Mammary epithelial cell (primary cell): ENCODE measurements at regions of chr20 and their contacts with region 1.

Region 1: DNA sequence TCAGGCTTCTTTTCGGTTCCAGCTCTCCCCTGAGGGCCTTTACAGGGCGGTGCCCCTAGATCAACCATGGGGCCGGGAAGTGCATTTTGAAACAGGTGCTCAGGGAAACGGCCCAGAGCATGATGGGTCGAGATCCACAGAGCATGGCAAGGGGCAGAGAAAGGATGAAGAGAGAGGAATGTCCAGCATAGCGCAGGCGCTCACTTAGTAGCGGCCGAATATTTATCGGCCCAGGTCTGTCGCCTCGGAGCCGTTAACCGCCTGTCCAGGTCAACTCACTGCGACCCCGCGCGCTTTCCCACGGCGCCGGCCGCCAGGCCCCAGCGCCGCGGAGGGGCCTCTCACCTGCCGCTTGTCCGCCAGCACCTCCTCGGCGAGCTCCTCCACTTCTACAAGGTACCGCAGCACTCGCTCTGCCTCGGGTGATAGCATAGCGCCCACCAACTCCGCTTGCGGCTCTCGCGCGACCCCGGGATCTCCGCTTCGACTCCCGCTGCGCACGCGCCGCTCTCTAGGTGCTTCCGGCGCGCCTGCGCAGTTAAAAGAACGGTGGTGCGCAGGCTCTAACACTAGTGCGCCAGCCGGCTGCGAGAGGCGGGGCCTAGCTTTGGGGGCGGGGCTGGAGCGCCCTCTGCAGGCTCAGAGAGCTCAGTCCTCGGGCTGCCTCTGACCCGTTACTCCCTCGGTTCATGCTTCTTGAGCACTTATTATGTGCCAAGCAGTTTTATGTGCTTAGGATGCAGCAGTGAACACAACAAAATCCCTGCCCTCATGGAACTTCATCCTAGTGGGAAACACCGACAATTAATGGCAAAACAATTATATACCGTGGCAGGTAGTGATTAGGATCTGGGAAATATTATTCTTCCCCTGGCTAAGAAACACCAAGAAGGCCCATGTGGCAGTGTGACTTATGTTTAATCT is at the start of gene PDRG1:
- DNase-seq: peak; percentile 90
- H3K4me3 ChIP-seq: peak within 1 kb of the TSS; percentile 80 to 98 (median 86)
- H3K27ac ChIP-seq: peak within 1 kb of the TSS; percentile 40
- H3K4me1 ChIP-seq: peaks cover 8% of the 10 kb centered on the region
- H3K27me3 ChIP-seq: no peaks in the 10 kb centered on the region
- CTCF ChIP-seq: peak; percentile 84 to 96
- total RNA-seq, gene PDRG1: 5.0 to 15.6 TPM

Region 2: DNA sequence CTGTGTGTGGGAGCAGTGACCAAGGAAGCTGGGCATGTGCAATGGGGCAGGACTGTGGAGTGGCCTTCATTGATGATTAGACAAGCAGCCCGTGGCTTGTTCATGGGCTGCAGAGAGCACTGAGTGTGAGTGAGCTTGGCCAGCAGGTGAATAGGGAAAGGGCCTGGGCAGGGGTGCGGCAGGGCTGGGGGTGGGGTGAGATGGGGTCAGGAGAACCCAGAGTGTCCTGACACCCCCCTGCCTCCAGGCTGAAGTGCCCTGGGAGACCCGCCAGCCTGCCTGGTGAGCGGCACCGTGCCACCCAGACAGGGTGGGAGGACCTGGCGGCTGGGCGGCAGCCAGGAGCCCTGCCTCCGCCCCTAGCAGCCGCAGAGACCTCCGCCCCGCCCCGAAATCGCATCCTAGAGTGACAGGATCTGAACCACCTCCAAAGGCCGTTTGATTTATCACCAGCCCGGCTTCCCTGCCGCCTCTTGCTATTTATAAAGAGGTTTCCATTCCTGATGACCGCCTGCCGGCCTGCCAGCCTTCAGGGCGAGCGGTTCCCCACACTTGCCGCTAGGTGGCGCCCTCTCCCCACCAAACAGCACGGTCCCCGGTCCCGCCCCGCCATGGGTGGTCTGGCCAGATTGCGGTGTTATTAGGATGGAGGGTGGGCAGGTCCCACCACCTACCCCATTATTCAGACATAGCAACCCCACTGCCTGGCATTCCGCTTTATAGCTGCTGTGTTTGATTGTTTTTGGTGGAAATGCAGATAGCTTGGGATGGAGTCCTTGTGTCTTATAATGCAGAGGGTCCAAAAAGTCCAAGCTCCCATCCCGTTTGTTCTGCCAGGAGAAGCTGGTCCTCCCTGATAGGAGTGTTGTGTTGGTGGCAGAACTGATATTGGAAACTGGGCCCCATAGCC is 129.1 kb before region 1 on chr20:
- CTCF ChIA-PET with region 1: interaction called, 3 read pairs
- dilution Hi-C with region 1: no loop called
- in situ Hi-C with region 1: no loop called
- intact Hi-C with region 1: loop called (anchors 1 kb)
- DNase-seq: peak; percentile 29
- H3K4me3 ChIP-seq: no peak overlapping the region
- H3K27ac ChIP-seq: no peak overlapping the region
- H3K4me1 ChIP-seq: no peaks in the 10 kb centered on the region
- H3K27me3 ChIP-seq: no peaks in the 10 kb centered on the region
- CTCF ChIP-seq: peak; percentile 78 to 96

Region 3: GRCh38 chr20:31859998-31860709 is 91.6 kb before region 1 on chr20:
- CTCF ChIA-PET with region 1: no interaction called
- dilution Hi-C with region 1: no loop called
- in situ Hi-C with region 1: loop called in 1 of 2 experiments (anchors 10 kb)
- intact Hi-C with region 1: no loop called
- DNase-seq: peak; percentile 40
- H3K4me3 ChIP-seq: no peak overlapping the region
- H3K27ac ChIP-seq: no peak overlapping the region
- H3K4me1 ChIP-seq: peaks cover 10% of the 10 kb centered on the region
- H3K27me3 ChIP-seq: peaks cover 3% of the 10 kb centered on the region
- CTCF ChIP-seq: no peak

Region 4: DNA sequence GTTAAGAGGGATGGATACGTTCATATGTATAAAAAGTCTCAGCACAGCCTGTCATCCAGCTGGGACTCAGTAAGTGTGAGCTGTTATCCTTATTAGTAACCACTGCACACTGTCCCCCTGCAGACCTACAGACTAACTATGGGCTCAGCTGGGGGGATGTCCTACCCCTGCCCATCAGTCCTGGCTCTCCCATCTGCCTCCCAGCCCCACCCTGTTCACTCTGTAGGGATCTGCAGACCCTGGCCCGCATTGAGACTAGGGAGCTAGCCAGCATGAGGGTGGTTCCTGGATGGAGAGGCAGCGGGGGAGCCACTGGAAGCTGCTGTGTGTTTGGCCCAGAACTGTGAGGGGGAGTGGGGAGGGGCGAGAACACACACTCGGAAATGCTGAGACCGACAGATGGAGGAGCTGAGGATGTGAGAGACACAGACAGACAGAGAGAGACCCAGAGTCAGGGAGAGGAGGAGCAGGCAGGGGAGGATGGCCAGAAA is 33.2 kb after region 1 on chr20:
- CTCF ChIA-PET with region 1: no interaction called
- dilution Hi-C with region 1: no loop called
- in situ Hi-C with region 1: no loop called
- intact Hi-C with region 1: loop called (anchors 1 kb)
- DNase-seq: no peak
- H3K4me3 ChIP-seq: no peak overlapping the region
- H3K27ac ChIP-seq: no peak overlapping the region
- H3K4me1 ChIP-seq: peaks cover 7% of the 10 kb centered on the region
- H3K27me3 ChIP-seq: peaks cover 2% of the 10 kb centered on the region
- CTCF ChIP-seq: no peak

Region 5: GRCh38 chr20:32031007-32031958 is 79.5 kb after region 1 on chr20:
- CTCF ChIA-PET with region 1: interaction called, 3 read pairs
- dilution Hi-C with region 1: no loop called
- in situ Hi-C with region 1: no loop called
- intact Hi-C with region 1: loop called (anchors 5 kb)
- DNase-seq: peak; percentile 66
- H3K4me3 ChIP-seq: peak overlapping the region in 1 of 3 experiments; percentile 23
- H3K27ac ChIP-seq: no peak overlapping the region
- H3K4me1 ChIP-seq: peaks cover 5% of the 10 kb centered on the region
- H3K27me3 ChIP-seq: peaks cover 3% of the 10 kb centered on the region
- CTCF ChIP-seq: peak; percentile 72 to 88

Region 6: DNA sequence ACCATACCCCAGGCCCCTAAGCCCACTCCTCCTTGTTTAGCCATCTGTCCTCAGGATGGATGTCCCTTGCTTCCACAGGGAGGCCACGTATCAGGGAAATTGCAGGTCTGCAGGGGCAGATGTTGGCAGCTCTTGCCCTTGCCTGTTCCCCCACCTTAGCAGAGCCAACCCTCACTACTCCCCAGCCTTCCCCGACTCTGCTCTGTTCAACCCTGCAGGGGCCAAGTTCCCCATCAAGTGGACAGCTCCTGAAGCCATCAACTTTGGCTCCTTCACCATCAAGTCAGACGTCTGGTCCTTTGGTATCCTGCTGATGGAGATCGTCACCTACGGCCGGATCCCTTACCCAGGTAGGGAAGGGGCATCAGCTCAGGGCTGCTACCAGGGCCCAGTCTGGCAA is 147.0 kb after region 1 on chr20:
- CTCF ChIA-PET with region 1: no interaction called
- dilution Hi-C with region 1: no loop called
- in situ Hi-C with region 1: no loop called
- intact Hi-C with region 1: no loop called
- DNase-seq: no peak
- H3K4me3 ChIP-seq: no peak overlapping the region
- H3K27ac ChIP-seq: no peak overlapping the region
- H3K4me1 ChIP-seq: no peaks in the 10 kb centered on the region
- H3K27me3 ChIP-seq: peaks cover 7% of the 10 kb centered on the region
- CTCF ChIP-seq: no peak